ENCODE measurements at regions of chr6 and their contacts with region 1.

Region 1: DNA sequence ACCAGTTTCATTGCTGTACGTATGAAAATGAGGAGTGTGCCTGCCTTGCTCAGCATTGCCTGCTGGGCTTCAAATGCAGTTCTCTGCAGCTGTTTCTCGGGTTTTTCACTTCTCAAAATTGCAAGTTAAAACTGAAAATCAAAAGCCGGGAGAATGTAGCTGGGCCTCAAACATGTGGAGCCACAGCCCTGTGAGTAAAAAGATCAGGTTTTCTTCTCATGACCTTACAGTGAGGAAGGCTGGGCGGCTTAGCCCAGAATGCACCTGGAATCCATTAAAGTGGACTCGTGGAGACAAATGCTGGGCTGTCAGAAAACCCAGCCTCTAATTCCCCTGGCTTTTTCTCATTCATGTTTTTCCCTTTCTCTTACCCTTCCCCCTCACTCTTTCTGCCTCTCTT is 34.4 kb downstream of the DSE start:
- DNase-seq: peak; percentile 42
- CTCF ChIP-seq: no peak

Region 2: GRCh38 chr6:116190550-116190949 is 214.6 kb before region 1 on chr6:
- CTCF ChIA-PET with region 1: no interaction called
- POLR2A ChIA-PET with region 1: no interaction called
- DNase-seq: no peak
- CTCF ChIP-seq: no peak

Region 3: DNA sequence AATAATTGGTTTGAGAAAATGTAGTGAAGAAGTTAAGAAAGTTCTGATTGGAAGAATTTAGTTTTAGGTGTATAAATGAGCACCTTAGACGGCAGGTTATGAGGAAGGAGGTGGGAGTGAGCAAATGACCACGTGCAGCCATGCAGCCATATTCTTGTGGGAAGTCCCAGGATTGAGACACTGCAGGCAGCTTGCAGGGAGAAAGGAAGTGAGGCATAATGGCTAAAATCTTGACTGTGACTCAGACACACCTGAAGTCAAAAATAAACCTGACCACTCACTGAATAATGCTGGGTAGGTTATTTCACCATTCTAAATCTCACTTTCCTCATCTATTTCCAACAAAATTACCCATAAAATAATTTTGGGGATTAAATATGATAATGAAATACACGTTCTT is 17.8 kb before region 1 on chr6:
- CTCF ChIA-PET with region 1: interaction called, 29 read pairs
- POLR2A ChIA-PET with region 1: no interaction called
- DNase-seq: peak; percentile 25
- CTCF ChIP-seq: no peak

Region 4: GRCh38 chr6:116424001-116424400 is 18.9 kb after region 1 on chr6:
- CTCF ChIA-PET with region 1: interaction called, 48 read pairs
- POLR2A ChIA-PET with region 1: no interaction called
- DNase-seq: no peak
- CTCF ChIP-seq: no peak

Region 5: DNA sequence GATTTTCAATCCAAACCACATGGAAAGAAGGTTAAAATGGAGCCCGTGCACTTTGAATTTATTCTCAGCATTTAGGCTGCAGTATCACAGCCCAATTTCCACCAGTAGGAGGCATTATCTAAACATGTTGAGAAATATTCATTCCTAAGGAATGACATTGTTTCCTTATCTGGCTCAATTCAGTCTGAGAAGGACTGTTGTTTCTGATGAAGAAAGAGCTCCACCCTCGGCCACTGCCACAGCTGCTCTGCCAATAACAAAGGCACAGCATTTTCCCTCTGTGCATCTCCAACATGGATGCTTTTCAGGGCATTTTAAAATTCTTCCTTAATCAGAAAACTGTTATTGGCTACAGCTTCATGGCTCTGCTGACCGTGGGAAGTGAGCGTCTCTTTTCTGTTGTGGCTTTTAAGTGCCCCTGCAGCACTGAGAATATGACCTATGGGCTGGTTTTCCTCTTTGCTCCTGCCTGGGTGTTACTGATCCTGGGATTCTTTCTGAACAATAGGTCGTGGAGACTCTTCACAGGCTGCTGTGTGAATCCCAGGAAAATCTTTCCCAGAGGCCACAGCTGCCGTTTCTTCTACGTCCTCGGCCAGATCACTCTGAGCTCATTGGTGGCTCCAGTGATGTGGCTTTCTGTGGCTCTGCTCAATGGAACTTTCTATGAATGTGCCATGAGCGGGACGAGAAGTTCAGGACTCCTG is 106.4 kb after region 1 on chr6 and contains the start of gene CALHM5:
- CTCF ChIA-PET with region 1: no interaction called
- POLR2A ChIA-PET with region 1: no interaction called
- DNase-seq: no peak
- CTCF ChIP-seq: no peak